MCF 10A (cell line): ENCODE measurements at regions of chr21 and their contacts with region 1.

Region 1: DNA sequence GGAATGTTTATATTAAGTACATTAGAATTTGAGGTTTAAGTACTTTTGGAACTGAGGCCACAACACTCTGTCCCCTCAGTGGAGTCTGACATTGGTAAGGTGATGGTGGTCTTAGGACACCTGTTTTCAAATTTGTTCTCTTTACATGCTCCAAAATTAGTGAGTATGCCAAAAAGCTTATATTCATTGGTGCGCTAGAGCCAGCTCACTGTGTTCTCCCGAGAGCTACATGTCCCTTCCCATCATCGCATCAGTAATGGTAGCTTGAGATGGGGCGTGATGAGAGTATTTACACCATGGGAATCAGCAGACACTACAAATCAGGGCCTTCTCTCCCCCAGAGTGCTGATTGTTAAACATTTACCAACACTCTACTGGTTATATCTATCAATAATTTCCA is 19.5 kb downstream of the ETS2 start:
- DNase-seq: peak; percentile 44
- H3K4me3 Mint-ChIP-seq: no peak overlapping the region
- H3K27ac Mint-ChIP-seq: no peak overlapping the region
- H3K4me1 Mint-ChIP-seq: peaks cover 7% of the 10 kb centered on the region
- H3K27me3 Mint-ChIP-seq: no peaks in the 10 kb centered on the region
- CTCF ChIP-seq: no peak

Region 2: DNA sequence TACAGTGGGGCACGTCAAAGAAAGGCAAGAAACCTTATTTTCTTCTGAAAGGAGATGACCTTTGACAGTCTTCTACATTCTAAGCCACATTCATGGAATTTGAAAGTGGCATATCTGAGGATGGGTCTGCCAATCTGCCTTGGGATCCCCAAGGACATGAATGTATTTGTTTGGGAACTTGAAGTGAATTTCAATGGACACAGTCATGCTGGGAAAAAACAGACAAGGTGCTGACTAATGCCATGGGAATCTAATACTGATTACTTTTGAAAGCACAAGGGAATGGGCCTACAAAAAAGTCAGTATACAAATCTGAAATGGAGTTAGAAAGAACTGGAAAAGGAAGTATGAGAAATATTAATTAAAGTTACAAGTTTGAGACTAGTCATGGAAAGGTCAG is 1037.8 kb before region 1 on chr21:
- CTCF ChIA-PET with region 1: no interaction called
- POLR2A ChIA-PET with region 1: no interaction called
- intact Hi-C with region 1: no loop called
- DNase-seq: peak; percentile 38
- H3K4me3 Mint-ChIP-seq: no peak overlapping the region
- H3K27ac Mint-ChIP-seq: peak overlapping the region; percentile 68
- H3K4me1 Mint-ChIP-seq: peaks cover 11% of the 10 kb centered on the region
- H3K27me3 Mint-ChIP-seq: no peaks in the 10 kb centered on the region
- CTCF ChIP-seq: no peak

Region 3: DNA sequence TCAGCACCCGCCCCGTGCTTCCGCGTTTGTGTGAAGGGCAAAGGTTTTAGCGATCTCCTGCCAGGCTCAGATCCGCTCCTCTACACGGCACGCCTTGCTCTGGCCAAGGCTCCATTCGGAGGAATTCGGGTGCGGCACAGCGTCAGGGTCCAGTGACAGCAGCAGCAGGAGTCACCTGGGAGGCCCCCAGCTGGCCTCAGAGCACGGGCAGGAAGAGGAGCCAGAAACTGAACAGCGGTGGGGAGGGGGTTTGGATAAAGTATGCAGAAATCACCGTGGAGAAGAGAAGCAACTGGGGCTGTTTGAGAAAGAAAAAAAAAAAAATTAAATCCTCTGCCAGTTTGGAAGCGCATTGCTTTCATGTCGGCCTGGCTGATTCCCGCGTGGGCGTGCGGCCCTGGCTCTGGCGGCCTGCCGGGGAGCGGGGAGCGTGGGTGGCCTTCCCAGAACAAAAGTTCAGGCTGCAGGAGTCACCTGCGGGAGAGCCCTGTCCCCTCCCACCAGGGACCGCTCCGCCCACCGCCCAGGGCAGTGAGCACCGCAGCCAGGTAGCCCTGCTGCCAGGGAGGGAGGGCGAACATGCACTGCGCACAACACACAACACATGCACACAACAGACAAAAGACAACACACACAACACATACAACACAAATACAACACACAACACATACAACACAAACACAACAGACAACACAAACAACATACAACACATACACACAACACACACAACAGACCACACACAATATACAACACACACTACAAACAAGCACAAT is 88.0 kb after region 1 on chr21:
- CTCF ChIA-PET with region 1: no interaction called
- POLR2A ChIA-PET with region 1: interaction called, 103 read pairs
- intact Hi-C with region 1: no loop called
- DNase-seq: peak; percentile 92
- H3K4me3 Mint-ChIP-seq: no peak overlapping the region
- H3K27ac Mint-ChIP-seq: no peak overlapping the region
- H3K4me1 Mint-ChIP-seq: peaks cover 9% of the 10 kb centered on the region
- H3K27me3 Mint-ChIP-seq: no peaks in the 10 kb centered on the region
- CTCF ChIP-seq: no peak